ENCODE measurements at regions of chr20 and their contacts with region 1.

Region 1: DNA sequence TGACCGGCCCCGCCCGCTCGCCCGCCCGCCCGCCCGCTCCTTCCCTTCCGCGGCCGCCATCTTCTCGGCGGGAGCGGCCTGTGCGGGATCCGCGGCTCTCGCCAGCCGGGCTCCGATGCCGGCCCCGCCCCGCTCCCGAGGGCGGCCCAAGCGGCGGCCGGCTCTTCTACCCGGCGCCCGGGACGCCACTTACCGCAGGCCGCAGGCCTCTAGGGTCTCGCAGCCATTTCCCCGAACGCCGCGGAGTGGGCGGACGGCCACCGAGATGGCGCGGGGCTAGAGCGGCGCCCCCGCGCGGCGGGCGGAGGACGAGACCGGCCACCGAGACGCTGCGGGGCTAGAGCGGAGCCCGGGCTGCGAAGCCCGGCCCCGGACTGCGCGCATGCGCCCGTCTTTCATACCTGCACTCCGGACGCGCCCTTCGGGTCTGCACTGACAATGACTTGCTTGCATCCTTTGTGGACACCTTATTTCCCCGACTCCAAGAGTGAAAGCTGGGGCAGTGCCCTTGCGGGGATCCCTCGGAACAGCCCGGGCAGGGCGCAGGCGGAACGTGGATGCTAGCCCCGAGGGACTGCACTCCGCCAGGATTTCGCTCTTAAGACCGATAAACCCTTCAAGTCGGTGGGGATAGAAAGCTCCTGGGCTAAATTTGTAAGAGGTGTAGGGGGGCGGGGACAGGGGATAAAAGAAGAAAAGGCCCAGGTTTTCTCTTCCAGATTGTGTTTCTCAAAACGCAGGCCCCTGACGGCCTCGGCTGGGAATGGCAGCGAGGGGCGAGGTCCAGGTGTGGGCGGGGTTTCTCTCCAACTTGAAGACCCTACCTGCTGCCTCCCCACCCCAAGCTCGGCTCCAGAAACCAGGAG is at the start of gene DIDO1:
- DNase-seq: peak; percentile 93
- H3K4me3 ChIP-seq: peak within 1 kb of the TSS; percentile 92
- H3K27ac ChIP-seq: peak within 1 kb of the TSS; percentile 89
- H3K4me1 ChIP-seq: peaks cover 83% of the 10 kb centered on the region
- CTCF ChIP-seq: peak; percentile 62
- total RNA-seq, gene DIDO1: 65.1 and 69.2 TPM in 2 replicates

Region 2: DNA sequence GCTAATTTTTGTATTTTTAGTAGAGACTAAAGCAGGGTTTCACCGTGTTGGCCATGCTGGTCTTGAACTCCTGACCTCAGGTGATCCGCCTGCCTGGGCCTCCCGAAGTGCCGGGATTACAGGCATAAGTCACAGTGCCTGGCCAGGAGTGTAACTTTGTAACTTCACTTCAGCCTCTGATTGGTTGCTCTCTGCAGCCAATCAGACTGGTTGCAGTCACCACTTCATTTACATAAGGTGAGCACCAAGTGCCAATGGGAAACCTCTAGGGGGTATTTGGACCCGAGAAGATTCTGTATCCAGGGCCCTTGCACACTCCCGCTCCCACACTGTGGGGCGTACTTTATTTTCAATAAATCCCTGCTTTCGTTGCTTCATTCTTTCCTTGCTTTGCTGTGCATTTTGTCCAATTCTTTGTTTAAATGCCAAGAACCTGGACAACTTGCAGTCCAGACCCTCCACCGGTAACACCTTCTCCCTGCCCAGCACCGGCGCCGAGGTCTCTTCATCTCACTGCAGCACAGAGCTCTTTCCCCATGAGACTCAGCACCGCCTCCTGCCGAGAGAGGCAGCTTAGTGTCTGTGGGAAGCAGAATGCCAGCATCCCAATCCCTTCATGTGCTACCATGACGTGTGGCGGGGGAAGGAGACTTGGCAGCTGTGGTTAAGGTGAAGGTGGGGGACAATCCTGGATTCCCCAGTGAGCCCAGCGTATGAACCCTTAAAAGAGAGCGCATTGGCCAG is 144.2 kb before region 1 on chr20:
- CTCF ChIA-PET with region 1: no interaction called
- POLR2A ChIA-PET with region 1: no interaction called
- intact Hi-C with region 1: no loop called
- DNase-seq: no peak
- H3K4me3 ChIP-seq: no peak overlapping the region
- H3K27ac ChIP-seq: no peak overlapping the region
- H3K4me1 ChIP-seq: peaks cover 4% of the 10 kb centered on the region
- CTCF ChIP-seq: no peak

Region 3: DNA sequence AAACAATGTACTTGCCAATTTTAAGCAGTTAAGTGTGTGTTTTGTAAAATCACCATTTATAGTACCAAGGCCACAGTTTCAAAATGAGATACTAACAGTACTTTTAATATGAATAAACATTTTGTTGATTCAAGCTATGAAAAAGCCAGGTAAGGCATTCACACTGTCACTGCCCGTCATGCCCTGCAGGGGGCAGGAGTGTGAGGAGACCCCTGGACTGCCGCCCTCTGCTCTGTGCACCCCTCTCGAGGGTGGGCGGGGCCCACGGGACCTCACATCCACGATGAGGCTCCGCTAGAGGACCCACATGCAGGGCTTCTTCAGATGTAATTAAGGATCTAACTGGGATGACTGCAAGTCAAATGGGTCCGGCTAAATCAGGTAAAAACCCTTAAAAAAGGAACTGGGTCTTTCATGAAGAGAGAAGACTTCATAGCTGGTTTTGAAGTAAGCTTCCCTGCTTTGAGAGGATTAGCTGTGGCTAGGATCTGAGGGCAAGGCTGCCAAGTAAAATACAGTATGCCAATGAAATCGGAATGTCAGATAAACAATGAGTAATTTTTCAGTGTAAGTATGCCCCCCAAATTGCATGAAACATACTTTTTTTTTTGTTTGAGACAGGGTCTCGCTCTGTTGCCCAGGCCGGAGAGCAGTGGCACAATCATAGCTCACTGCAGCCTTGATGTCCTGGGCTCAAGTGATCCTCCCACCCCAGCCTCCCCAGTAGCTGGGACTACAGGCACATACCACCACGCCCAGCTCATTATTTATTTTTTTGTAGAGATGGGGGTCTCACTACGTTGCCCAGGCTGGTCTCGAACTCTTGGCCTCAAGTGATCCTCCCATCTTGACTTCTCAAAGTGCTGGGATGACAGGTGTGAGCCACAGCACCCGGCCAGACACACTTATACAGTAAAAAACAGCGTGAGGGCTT is 18.8 kb before region 1 on chr20:
- CTCF ChIA-PET with region 1: interaction called, 3 read pairs
- POLR2A ChIA-PET with region 1: no interaction called
- intact Hi-C with region 1: loop called (anchors 1 kb)
- DNase-seq: peak; percentile 60
- H3K4me3 ChIP-seq: no peak overlapping the region
- H3K27ac ChIP-seq: no peak overlapping the region
- H3K4me1 ChIP-seq: no peaks in the 10 kb centered on the region
- CTCF ChIP-seq: peak; percentile 81